Heart left ventricle (tissue), 16 donors: ENCODE measurements at regions of chr5 and their contacts with region 1.

Region 1: DNA sequence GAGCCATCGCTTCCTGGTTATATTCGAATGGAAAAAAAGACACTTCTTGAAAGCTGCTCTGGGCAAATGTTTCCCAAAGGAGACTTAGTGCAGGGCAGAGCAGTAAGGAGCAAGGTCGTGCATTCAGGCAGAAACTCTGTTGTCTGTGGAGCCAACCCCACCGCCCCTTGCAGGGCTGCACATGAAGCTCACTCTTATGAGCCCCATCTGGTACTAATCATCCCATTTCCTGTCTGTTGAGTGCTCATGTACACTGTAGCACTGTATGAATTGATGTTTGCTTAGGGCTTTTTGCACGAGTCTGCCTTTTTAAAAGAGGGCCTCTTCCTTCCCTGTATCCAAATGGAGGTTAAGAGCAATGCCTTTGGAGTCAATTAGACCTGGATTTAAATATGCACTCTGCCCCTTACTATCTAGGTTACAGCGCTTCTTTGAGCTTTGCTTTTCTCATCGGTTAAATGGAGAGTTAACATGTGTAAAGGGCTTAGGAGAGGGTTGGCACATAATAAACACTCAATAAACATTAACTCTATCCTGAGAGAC is 25.4 kb downstream of the HMHB1 start:
- DNase-seq: peak in 1 of 5 donors; percentile 28
- ATAC-seq: peak in 1 of 4 donors; percentile 69
- H3K4me3 ChIP-seq: no peak overlapping the region
- H3K27ac ChIP-seq: no peak overlapping the region
- H3K4me1 ChIP-seq: no peaks in the 10 kb centered on the region
- H3K27me3 ChIP-seq: no peaks in the 10 kb centered on the region
- CTCF ChIP-seq: no peak
- POLR2A ChIP-seq: no peak

Region 2: GRCh38 chr5:143968011-143968878 is 130.9 kb after region 1 on chr5:
- intact Hi-C with region 1: loop called in 1 of 10 experiments (anchors 10 kb)
- DNase-seq: no peak
- ATAC-seq: peak in 2 of 4 donors; percentile 41 to 49
- H3K4me3 ChIP-seq: no peak overlapping the region
- H3K27ac ChIP-seq: no peak overlapping the region
- H3K4me1 ChIP-seq: no peaks in the 10 kb centered on the region
- H3K27me3 ChIP-seq: no peaks in the 10 kb centered on the region
- CTCF ChIP-seq: peak; percentile 10 to 65 (median 28)
- POLR2A ChIP-seq: no peak

Region 3: DNA sequence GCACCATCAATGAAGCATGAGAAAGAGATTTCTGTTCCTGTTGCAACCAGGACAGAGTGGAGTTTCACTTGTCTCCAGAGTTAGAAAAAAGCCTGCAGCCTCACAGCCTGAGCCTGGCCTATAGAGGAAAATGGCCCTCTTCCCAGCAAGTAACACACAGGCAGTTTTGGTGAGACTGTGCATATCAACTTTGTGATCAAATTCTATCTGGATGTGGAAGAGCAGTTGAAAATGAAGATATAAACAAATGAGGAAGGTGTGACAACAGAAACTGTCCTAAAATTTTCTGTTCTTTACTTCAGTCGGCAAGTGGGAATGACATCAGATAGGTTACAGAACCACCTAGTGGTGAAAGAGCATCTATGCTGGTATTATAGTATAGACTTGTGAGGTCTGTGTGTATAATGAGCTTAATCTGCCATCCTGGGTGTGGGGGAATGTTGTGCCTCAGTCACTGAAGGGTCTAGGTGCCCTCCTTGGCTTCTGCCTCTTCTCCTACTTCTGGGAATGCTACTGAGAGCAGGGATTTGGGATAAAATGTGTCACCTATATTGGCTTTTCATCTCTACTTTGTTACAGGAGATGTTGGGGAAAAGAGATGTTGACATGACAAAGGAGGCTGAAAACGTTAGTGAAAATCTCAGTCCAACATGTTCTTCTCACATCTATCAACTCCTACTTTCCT is 304.9 kb after region 1 on chr5:
- intact Hi-C with region 1: loop called in 3 of 10 experiments (anchors 10 kb)
- DNase-seq: no peak
- ATAC-seq: peak; percentile 51 to 77 (median 62)
- H3K4me3 ChIP-seq: no peak overlapping the region
- H3K27ac ChIP-seq: no peak overlapping the region
- H3K4me1 ChIP-seq: peaks cover 0 to 34% (median 11%) of the 10 kb centered on the region in 12 donors
- H3K27me3 ChIP-seq: no peaks in the 10 kb centered on the region
- CTCF ChIP-seq: peak; percentile 36 to 78 (median 64)
- POLR2A ChIP-seq: no peak